A673 (cell line): ENCODE measurements at regions of chr12 and their contacts with region 1.

Region 1: DNA sequence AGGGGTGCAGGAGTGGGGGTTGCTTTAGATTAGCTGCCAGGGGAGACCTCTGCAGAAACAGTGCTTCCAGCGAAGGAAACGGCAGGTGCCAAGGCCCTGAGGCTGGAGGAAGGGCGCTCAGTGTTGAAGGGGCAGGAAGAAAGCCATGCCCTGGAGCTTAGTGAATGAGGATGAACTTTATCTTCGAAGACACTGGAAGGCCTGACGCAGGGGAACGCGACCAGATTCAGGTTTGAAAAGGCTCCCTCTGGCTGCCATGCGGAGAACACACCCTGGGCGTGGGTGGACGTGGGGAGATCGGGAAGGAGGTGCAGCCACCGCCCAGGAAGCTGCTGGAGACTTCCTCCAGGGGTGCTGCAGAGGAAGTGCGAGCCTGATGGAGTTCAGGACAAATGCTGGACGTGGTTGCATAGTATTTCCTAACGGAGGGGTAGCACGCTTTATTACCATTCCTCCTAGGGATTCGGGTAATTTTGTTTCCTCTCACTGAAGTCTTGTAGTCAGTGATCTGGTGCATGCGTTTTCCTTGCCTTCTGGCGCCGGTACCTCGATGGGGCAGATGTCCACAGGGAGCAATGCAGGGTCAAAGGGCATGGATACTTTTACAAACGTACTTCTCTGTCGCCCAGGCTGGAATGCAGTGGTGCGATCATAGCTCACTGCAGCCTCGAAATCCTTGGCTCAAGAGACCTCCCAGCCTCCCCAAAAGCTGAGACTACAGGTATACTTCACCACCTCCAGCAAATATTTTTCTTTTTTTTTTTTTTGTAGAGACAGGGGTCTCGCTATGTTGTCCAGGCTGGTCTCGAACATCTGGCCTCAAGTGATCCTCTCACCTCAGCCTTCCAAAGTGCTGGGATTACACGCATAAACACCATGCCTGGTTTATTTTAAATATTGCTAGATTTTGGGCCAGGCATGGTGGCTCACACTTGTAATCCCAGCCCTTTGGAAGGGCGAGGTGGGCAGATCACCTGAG is 26.4 kb upstream of the UBC start:
- DNase-seq: peak; percentile 98
- H3K4me3 ChIP-seq: peak overlapping the region; percentile 52
- H3K27ac ChIP-seq: peak overlapping the region; percentile 80
- H3K4me1 ChIP-seq: peaks cover 19% of the 10 kb centered on the region
- H3K27me3 ChIP-seq: no peaks in the 10 kb centered on the region
- CTCF ChIP-seq: peak; percentile 97

Region 2: DNA sequence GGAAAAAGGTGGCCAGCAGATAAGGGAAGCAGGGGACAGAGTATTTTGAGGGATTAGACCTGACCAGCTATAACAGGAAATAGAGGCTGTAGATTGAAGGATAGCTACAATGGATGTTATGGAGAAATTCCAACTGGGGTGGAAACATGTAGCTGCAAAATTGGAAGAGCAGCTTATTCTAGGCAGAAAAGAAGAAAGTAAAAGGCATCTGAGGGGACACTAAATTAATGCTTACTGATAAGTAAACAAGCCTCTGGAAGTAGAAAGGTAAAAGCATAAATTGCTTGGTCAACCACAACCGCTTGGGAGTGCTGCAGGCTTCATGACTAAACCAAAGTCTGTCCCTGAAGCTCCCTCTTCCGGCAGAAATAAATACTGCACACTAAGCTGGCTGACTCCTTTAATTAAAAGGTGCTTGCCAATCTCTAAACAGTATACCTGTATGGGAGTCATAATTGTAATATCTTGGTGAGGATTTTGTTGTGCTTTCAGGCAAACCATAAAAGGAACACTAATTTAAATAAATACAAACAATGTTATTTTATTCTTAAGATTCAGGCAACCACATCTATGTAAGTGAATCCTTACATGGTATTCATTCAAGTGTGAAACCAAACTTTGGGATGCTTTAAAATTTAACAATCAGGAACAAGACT is 34.1 kb before region 1 on chr12:
- CTCF ChIA-PET with region 1: interaction called, 25 read pairs
- POLR2A ChIA-PET with region 1: no interaction called
- intact Hi-C with region 1: loop called (anchors 2 kb)
- DNase-seq: peak; percentile 92
- H3K4me3 ChIP-seq: no peak overlapping the region
- H3K27ac ChIP-seq: no peak overlapping the region
- H3K4me1 ChIP-seq: peaks cover 17% of the 10 kb centered on the region
- H3K27me3 ChIP-seq: no peaks in the 10 kb centered on the region
- CTCF ChIP-seq: peak; percentile 99

Region 3: GRCh38 chr12:124914412-124915238 is 26.2 kb before region 1 on chr12 and contains the start of gene UBC:
- CTCF ChIA-PET with region 1: interaction called, 3 read pairs
- POLR2A ChIA-PET with region 1: interaction called, 20 read pairs
- intact Hi-C with region 1: no loop called
- DNase-seq: peak; percentile 94
- H3K4me3 ChIP-seq: peak within 1 kb of the TSS; percentile 87
- H3K27ac ChIP-seq: peak within 1 kb of the TSS; percentile 100
- H3K4me1 ChIP-seq: peaks cover 39% of the 10 kb centered on the region
- H3K27me3 ChIP-seq: no peaks in the 10 kb centered on the region
- CTCF ChIP-seq: no peak
- total RNA-seq, gene UBC: 965 and 1,053 TPM in 2 replicates

Region 4: GRCh38 chr12:124921200-124922058 is 19.4 kb before region 1 on chr12:
- CTCF ChIA-PET with region 1: interaction called, 3 read pairs
- POLR2A ChIA-PET with region 1: no interaction called
- intact Hi-C with region 1: loop called (anchors 1 kb)
- DNase-seq: peak; percentile 82
- H3K4me3 ChIP-seq: peak overlapping the region; percentile 60
- H3K27ac ChIP-seq: peak overlapping the region; percentile 66
- H3K4me1 ChIP-seq: peaks cover 28% of the 10 kb centered on the region
- H3K27me3 ChIP-seq: no peaks in the 10 kb centered on the region
- CTCF ChIP-seq: no peak

Region 5: GRCh38 chr12:124927201-124928094 is 13.4 kb before region 1 on chr12:
- CTCF ChIA-PET with region 1: no interaction called
- POLR2A ChIA-PET with region 1: no interaction called
- intact Hi-C with region 1: loop called (anchors 1 kb)
- DNase-seq: peak; percentile 94
- H3K4me3 ChIP-seq: peak overlapping the region; percentile 94
- H3K27ac ChIP-seq: peak overlapping the region; percentile 91
- H3K4me1 ChIP-seq: no peaks in the 10 kb centered on the region
- H3K27me3 ChIP-seq: no peaks in the 10 kb centered on the region
- CTCF ChIP-seq: no peak